Motor neuron (in vitro differentiated cells): ENCODE measurements at regions of chr5 and their contacts with region 1.

Region 1: GRCh38 chr5:73540192-73540591 is 25.2 kb downstream of the ANKRA2 start:
- ATAC-seq: peak in 6 of 8 experiments; percentile 13 to 92 (median 48)
- H3K4me3 ChIP-seq: no peak overlapping the region
- H3K27ac ChIP-seq: no peak overlapping the region
- H3K4me1 ChIP-seq: peaks cover 6 to 8% of the 10 kb centered on the region in 2 donors

Region 2: DNA sequence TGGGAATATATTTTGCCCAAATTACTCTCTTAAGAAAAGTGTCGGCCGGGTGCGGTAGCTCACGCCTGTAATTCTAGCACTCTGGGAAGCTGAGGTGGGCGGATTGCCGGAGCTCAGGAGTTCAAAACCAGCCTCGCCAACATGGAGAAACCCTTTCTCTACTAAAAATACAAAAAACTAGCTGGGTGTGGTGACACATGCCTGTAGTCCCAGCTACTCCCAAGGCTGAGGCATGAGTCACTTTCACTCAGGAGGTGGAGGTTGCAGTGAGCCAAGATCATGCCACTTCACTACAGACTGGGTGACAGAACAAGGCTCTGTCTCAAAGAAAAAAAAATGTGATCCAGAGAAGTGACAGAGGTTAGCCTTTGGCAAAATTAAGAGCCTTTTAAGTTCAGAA is 446.2 kb before region 1 on chr5:
- in situ Hi-C with region 1: loop called in 1 of 9 experiments (anchors 25 kb)
- ATAC-seq: peak in 4 of 8 experiments; percentile 82 to 99 (median 92)
- H3K4me3 ChIP-seq: no peak overlapping the region
- H3K27ac ChIP-seq: no peak overlapping the region
- H3K4me1 ChIP-seq: no peaks in the 10 kb centered on the region

Region 3: DNA sequence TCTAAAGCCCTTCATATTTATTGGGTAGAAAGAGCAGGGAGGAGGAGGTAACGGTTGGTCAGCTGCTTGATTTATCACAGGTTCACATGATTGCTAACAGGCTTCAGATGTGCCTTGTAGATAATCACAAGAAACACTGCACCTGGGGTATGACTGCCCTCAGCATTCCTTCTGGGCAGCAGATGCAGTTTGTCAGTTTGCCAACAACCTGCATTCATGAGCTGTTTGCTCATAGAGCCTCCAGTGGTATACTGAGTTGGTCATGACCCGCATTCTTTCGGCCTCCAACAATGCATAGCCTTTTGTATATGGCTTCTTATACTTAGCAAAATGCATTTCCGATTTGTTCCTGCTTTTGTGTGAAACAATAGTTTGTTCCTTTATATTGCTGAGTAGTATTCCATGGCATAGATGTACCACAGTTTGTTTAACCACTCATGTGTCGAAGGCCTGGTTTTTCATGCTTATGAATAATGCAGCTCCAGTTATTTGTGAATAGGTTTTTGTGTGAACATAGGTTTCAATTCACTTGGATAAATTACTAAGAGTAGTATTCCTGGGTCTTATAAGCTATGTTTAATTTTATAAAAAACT is 169.4 kb after region 1 on chr5:
- in situ Hi-C with region 1: no loop called
- ATAC-seq: peak in 1 of 8 experiments; percentile 77
- H3K4me3 ChIP-seq: no peak overlapping the region
- H3K27ac ChIP-seq: no peak overlapping the region
- H3K4me1 ChIP-seq: no peaks in the 10 kb centered on the region